ENCODE measurements at regions of chr22 and their contacts with region 1.

Region 1: GRCh38 chr22:32528984-32529982 is 54.7 kb downstream of the FBXO7 start:
- DNase-seq: peak; percentile 21 to 74 (median 62)
- ATAC-seq: no peak
- H3K4me3 ChIP-seq: no peak overlapping the region
- H3K4me3 Mint-ChIP-seq: no peak overlapping the region
- H3K27ac ChIP-seq: no peak overlapping the region
- H3K27ac Mint-ChIP-seq: no peak overlapping the region
- H3K4me1 ChIP-seq: no peaks in the 10 kb centered on the region
- H3K4me1 Mint-ChIP-seq: no peaks in the 10 kb centered on the region
- H3K27me3 ChIP-seq: no peaks in the 10 kb centered on the region
- H3K27me3 Mint-ChIP-seq: peaks cover 10% of the 10 kb centered on the region
- CTCF ChIP-seq: peak; percentile 46

Region 2: GRCh38 chr22:32518848-32519247 is 10.4 kb before region 1 on chr22:
- CTCF ChIA-PET with region 1: interaction called, 12 read pairs
- POLR2A ChIA-PET with region 1: no interaction called
- intact Hi-C with region 1: no loop called
- DNase-seq: peak in 2 of 9 experiments; percentile 16 to 26
- ATAC-seq: no peak
- H3K4me3 ChIP-seq: no peak overlapping the region
- H3K4me3 Mint-ChIP-seq: no peak overlapping the region
- H3K27ac ChIP-seq: no peak overlapping the region
- H3K27ac Mint-ChIP-seq: no peak overlapping the region
- H3K4me1 ChIP-seq: no peaks in the 10 kb centered on the region
- H3K4me1 Mint-ChIP-seq: no peaks in the 10 kb centered on the region
- H3K27me3 ChIP-seq: no peaks in the 10 kb centered on the region
- H3K27me3 Mint-ChIP-seq: no peaks in the 10 kb centered on the region
- CTCF ChIP-seq: no peak

Region 3: GRCh38 chr22:32644252-32645100 is 115.2 kb after region 1 on chr22:
- CTCF ChIA-PET with region 1: no interaction called
- POLR2A ChIA-PET with region 1: no interaction called
- intact Hi-C with region 1: no loop called
- DNase-seq: peak in 6 of 9 experiments; percentile 10 to 66 (median 24)
- ATAC-seq: peak; percentile 49
- H3K4me3 ChIP-seq: peak overlapping the region; percentile 22
- H3K4me3 Mint-ChIP-seq: peak overlapping the region; percentile 79
- H3K27ac ChIP-seq: peak overlapping the region; percentile 45 to 52
- H3K27ac Mint-ChIP-seq: peak overlapping the region; percentile 94
- H3K4me1 ChIP-seq: peaks cover 14% of the 10 kb centered on the region
- H3K4me1 Mint-ChIP-seq: peaks cover 16% of the 10 kb centered on the region
- H3K27me3 ChIP-seq: no peaks in the 10 kb centered on the region
- H3K27me3 Mint-ChIP-seq: peaks cover 2% of the 10 kb centered on the region
- CTCF ChIP-seq: no peak

Region 4: GRCh38 chr22:32660292-32660691 is 131.0 kb after region 1 on chr22:
- CTCF ChIA-PET with region 1: interaction called, 4 read pairs
- POLR2A ChIA-PET with region 1: no interaction called
- intact Hi-C with region 1: loop called in 1 of 2 experiments (anchors 2 kb)
- DNase-seq: peak; percentile 8 to 66 (median 53)
- ATAC-seq: no peak
- H3K4me3 ChIP-seq: no peak overlapping the region
- H3K4me3 Mint-ChIP-seq: no peak overlapping the region
- H3K27ac ChIP-seq: no peak overlapping the region
- H3K27ac Mint-ChIP-seq: no peak overlapping the region
- H3K4me1 ChIP-seq: no peaks in the 10 kb centered on the region
- H3K4me1 Mint-ChIP-seq: peaks cover 4% of the 10 kb centered on the region
- H3K27me3 ChIP-seq: no peaks in the 10 kb centered on the region
- H3K27me3 Mint-ChIP-seq: peaks cover 6% of the 10 kb centered on the region
- CTCF ChIP-seq: peak; percentile 61

Region 5: DNA sequence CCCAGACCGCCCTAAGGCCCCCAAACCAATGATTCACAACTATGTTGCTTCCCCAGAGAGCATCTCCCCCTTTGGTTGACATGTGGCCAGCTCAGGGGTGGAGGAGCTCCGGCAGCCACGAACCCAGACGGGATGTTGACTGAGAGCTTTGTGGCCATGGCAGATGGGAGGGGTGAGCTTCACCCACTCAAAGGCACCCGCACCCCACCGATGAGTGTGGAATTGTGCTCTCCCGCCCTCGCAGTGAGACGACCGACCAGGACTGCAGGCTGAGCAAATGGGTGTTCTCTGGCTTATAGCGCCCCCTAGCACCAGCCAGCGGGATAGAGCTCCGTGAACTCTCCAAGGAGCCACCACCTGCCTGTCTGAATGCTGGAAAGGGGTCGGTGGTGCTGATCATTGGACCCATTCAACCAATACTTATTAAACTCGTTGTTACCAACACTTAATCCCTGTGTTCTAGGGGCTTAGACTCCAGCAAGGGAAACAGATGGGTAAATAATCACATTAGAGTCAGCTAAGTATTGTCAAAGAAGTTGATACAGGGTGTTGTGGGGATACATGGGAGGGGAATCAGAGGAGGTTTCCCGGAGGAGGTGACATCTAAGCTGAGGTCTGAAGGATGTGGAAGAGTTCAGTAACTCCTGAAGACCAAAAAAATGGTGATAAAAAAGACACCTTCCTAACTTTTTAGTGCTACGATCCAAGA is 267.7 kb after region 1 on chr22:
- CTCF ChIA-PET with region 1: interaction called, 27 read pairs
- POLR2A ChIA-PET with region 1: no interaction called
- intact Hi-C with region 1: loop called in 1 of 2 experiments (anchors 1 kb)
- DNase-seq: peak; percentile 3 to 67 (median 54)
- ATAC-seq: peak; percentile 61
- H3K4me3 ChIP-seq: no peak overlapping the region
- H3K4me3 Mint-ChIP-seq: no peak overlapping the region
- H3K27ac ChIP-seq: no peak overlapping the region
- H3K27ac Mint-ChIP-seq: no peak overlapping the region
- H3K4me1 ChIP-seq: no peaks in the 10 kb centered on the region
- H3K4me1 Mint-ChIP-seq: peaks cover 5% of the 10 kb centered on the region
- H3K27me3 ChIP-seq: peaks cover 0 to 4% of the 10 kb centered on the region in 2 experiments
- H3K27me3 Mint-ChIP-seq: peaks cover 27% of the 10 kb centered on the region
- CTCF ChIP-seq: peak; percentile 69

Region 6: DNA sequence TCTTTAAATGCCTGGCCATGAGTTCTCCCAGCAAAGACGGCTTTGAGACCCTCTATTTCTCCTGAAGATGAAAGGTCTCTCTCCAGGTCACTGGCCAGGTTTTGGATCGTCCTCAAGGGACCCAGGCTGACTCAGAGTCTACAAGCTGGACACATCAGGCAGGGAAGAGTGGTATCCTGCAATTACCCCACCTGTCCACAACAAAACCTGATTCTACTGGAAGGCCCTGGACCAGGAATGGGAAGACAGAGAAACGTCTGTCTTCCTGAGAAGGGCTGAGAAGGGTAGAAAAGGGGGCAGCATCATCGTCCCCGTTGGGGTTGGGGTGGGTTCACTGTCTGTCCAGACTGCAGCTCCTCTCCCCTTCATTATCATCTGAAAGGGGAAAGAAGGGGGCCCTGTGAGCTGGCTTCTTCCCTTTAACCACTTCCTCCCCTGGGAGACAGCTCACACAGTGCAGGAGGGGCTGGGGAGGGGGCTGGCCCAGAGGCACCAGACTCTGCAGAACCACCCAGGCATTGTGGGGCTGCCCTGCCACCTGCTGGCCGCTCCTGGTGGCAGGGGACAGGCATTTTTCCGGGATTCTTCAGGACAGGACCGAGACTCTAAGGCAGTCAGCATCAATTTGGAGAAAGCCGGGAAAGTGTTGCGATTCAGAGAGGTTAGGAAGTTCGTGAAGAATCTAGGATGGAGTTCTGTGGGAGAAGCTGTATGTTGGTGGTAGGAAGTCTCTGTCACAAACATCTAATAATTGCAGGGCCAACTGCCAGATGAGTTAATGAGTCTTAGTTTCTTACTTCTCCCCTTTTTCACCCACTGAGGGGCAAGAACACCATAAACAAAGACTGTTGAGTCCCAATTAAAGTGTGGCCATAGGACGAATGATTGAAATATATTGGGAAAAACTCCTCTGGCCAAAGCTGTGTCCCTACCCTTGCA is 471.3 kb after region 1 on chr22:
- CTCF ChIA-PET with region 1: interaction called, 12 read pairs
- POLR2A ChIA-PET with region 1: no interaction called
- intact Hi-C with region 1: loop called in 1 of 2 experiments (anchors 1 kb)
- DNase-seq: peak in 6 of 9 experiments; percentile 4 to 51 (median 25)
- ATAC-seq: no peak
- H3K4me3 ChIP-seq: no peak overlapping the region
- H3K4me3 Mint-ChIP-seq: no peak overlapping the region
- H3K27ac ChIP-seq: no peak overlapping the region
- H3K27ac Mint-ChIP-seq: no peak overlapping the region
- H3K4me1 ChIP-seq: no peaks in the 10 kb centered on the region
- H3K4me1 Mint-ChIP-seq: peaks cover 2% of the 10 kb centered on the region
- H3K27me3 ChIP-seq: no peaks in the 10 kb centered on the region
- H3K27me3 Mint-ChIP-seq: peaks cover 6% of the 10 kb centered on the region
- CTCF ChIP-seq: peak; percentile 62

Region 7: DNA sequence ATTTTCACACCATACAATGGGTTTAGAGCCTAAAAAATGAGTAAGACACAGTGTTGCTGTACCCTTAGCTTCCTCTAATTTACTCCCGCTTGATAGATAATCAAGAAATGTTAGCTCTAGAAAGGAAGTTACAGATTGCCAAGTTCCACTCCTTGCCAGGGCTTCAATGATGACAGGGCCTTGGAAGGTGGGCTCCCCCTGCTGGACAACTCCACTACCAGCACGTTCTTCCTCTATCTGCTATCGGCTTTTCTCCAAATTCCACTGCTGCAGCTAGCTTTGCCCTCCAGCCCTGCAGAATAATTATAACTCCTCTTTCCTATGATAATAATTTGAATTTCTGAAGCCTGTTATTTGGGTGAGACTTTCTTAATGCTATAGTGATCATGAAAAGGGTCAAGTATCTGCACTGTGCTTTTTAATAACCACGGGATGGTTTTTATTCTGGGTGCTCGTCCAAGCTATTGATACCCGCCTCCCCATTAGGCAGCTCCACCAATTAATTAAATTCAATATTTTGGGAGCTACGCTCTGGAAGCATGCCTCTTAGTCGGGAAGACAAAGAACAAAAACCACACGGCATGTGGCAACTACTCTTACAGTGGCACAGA is 519.9 kb after region 1 on chr22:
- CTCF ChIA-PET with region 1: interaction called, 3 read pairs
- POLR2A ChIA-PET with region 1: no interaction called
- intact Hi-C with region 1: loop called in 1 of 2 experiments (anchors 1 kb)
- DNase-seq: peak in 8 of 9 experiments; percentile 18 to 66 (median 53)
- ATAC-seq: no peak
- H3K4me3 ChIP-seq: no peak overlapping the region
- H3K4me3 Mint-ChIP-seq: no peak overlapping the region
- H3K27ac ChIP-seq: no peak overlapping the region
- H3K27ac Mint-ChIP-seq: no peak overlapping the region
- H3K4me1 ChIP-seq: no peaks in the 10 kb centered on the region
- H3K4me1 Mint-ChIP-seq: no peaks in the 10 kb centered on the region
- H3K27me3 ChIP-seq: peaks cover 0 to 4% of the 10 kb centered on the region in 2 experiments
- H3K27me3 Mint-ChIP-seq: peaks cover 29% of the 10 kb centered on the region
- CTCF ChIP-seq: peak; percentile 71